Heart right ventricle (tissue), 16 donors: ENCODE measurements at regions of chr15 and their contacts with region 1.

Region 1: DNA sequence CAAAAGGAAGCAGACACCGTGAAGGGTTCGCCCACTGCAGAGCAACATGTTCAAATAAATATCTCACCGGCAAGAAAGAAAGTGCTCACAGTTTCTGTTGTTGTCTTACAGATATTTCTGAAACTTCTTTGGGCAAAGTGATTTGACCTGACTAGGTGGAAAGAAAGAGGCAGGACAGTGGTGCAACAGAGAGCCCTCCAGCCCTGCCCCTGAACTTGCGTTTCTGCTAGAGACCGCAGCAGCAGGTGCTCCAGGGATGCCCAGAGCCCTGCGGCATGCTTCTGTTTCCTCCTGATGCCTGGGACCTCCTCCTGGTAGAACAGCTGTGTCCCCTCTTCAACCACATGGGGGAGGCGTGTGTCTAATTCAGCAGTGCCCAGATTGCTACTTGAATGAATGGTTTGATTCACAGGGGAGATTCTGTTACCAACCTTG is 123.4 kb downstream of the ATP10A start:
- DNase-seq: no peak
- ATAC-seq: no peak
- H3K4me3 ChIP-seq: no peak overlapping the region
- H3K27ac ChIP-seq: no peak overlapping the region
- H3K4me1 ChIP-seq: peaks cover 0 to 33% (median 20%) of the 10 kb centered on the region in 9 donors
- H3K27me3 ChIP-seq: peaks cover 0 to 5% (median 0%) of the 10 kb centered on the region in 7 donors
- CTCF ChIP-seq: peak in 7 of 9 donors; percentile 23 to 51 (median 31)

Region 2: GRCh38 chr15:25775317-25775912 is 35.7 kb after region 1 on chr15:
- intact Hi-C with region 1: loop called in 1 of 10 experiments (anchors 5 kb)
- DNase-seq: peak; percentile 64 to 81
- ATAC-seq: peak; percentile 84 to 95 (median 92)
- H3K4me3 ChIP-seq: no peak overlapping the region
- H3K27ac ChIP-seq: peak overlapping the region in 4 of 10 donors; percentile 18 to 45 (median 37)
- H3K4me1 ChIP-seq: peaks cover 0 to 19% (median 12%) of the 10 kb centered on the region in 9 donors
- H3K27me3 ChIP-seq: no peaks in the 10 kb centered on the region
- CTCF ChIP-seq: no peak

Region 3: GRCh38 chr15:25790000-25790660 is 50.4 kb after region 1 on chr15:
- intact Hi-C with region 1: loop called in 2 of 10 experiments (anchors 5 to 10 kb)
- DNase-seq: peak; percentile 49 to 54
- ATAC-seq: peak; percentile 75 to 85 (median 78)
- H3K4me3 ChIP-seq: no peak overlapping the region
- H3K27ac ChIP-seq: peak overlapping the region; percentile 23 to 88 (median 70)
- H3K4me1 ChIP-seq: peaks cover 0 to 65% (median 25%) of the 10 kb centered on the region in 9 donors
- H3K27me3 ChIP-seq: no peaks in the 10 kb centered on the region
- CTCF ChIP-seq: peak in 1 of 9 donors; percentile 4

Region 4: DNA sequence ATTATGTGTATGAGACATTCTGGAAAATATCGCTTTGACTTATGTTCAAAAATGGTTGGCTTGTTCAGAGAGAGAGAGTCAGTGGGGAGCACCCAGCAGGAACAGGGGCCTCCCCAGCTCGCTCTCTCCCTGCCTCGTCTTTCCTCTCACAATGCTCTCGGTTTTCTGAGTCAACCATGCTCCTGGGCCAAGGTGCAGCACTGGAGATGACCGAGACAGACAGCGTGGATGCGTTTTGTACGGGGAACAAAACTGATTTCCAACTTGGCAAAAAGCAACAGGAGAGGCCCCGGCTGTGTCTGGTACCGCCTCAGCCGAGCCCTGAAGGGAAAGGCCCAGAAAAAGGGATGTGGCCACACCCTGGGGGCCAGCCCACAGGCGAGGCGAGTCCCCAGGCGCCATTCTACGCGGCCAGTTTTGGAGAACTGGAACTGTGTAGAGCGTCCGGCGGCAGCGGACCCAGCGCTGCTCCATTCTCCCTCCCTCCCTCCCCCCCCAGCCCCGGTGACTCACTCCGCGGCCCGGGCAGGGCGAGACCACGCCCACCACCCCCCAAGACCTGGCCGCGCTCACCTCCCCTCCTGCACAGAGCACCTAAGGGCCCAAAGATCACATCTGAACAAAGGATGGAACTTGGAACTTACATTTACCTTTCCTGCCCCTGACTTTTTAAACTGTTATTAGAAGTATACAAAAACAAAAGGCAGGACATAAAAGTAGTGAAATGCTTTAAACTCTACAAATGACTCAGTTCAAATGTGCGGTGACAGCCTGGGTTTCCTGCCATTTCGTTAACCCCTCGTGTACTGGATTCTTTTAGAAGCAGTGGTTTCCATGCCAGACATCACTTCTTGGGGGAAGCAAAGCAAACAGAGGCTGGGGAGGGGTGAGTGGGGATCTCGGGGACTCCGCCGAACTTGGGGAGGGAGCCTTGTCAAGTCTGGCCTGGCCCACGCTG is 110.7 kb after region 1 on chr15:
- intact Hi-C with region 1: loop called in 1 of 10 experiments (anchors 5 kb)
- DNase-seq: peak; percentile 77 to 79
- ATAC-seq: peak; percentile 84 to 95 (median 89)
- H3K4me3 ChIP-seq: peak overlapping the region in 9 of 10 donors; percentile 23 to 53 (median 46)
- H3K27ac ChIP-seq: peak overlapping the region; percentile 40 to 86 (median 75)
- H3K4me1 ChIP-seq: peaks cover 0 to 50% (median 15%) of the 10 kb centered on the region in 9 donors
- H3K27me3 ChIP-seq: peaks cover 0 to 4% (median 0%) of the 10 kb centered on the region in 7 donors
- CTCF ChIP-seq: no peak

Region 5: GRCh38 chr15:25863111-25863967 is 123.6 kb after region 1 on chr15 and contains the start of gene ATP10A:
- intact Hi-C with region 1: loop called in 2 of 10 experiments (anchors 5 to 10 kb)
- DNase-seq: peak; percentile 44 to 45
- ATAC-seq: peak; percentile 21 to 68 (median 43)
- H3K4me3 ChIP-seq: peak within 1 kb of the TSS; percentile 21 to 68 (median 62)
- H3K27ac ChIP-seq: peak within 1 kb of the TSS in 8 of 10 donors; percentile 29 to 73 (median 52)
- H3K4me1 ChIP-seq: peaks cover 0 to 44% (median 21%) of the 10 kb centered on the region in 9 donors
- H3K27me3 ChIP-seq: peaks cover 0 to 56% (median 34%) of the 10 kb centered on the region in 7 donors
- CTCF ChIP-seq: no peak
- total RNA-seq, gene ATP10A: 0.45 to 1.9 (median 0.86) TPM

Region 6: DNA sequence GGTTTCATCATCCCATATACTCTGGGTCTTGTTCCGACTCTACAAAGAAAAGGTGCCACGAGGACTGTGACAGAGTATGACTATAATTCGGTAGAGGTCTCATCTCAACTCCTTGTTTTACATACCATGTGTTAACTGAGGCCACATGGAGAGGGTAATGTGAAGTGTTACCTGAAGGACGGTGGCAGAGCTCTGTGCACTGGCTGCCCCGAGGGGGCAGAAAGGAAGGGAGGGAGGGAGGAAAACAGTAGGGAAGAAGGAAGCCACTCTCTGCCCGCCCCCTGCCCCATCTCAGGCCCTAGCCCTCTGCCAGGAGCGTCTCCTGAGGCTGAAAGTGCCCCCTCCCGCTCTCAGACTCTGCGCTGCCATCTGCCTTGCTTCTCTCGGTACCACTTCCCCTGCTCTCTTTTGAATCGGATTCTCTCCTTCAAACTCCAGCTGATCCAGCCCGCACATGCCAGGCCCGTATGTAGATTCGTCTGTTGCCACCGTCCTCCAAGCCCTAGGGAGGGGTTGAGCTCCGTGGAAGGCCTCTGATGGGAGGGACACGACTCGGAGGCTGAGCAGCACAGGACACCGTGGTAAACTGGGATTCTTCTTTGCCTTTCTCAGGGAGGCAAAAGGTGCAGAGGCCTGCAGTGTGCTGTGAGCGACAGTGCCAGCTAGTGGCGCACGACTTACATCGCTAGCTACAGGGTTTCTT is 193.9 kb after region 1 on chr15:
- intact Hi-C with region 1: loop called in 2 of 10 experiments (anchors 10 kb)
- DNase-seq: peak; percentile 51 to 70
- ATAC-seq: peak; percentile 81 to 94 (median 88)
- H3K4me3 ChIP-seq: peak overlapping the region in 7 of 10 donors; percentile 7 to 31 (median 23)
- H3K27ac ChIP-seq: no peak overlapping the region
- H3K4me1 ChIP-seq: peaks cover 0 to 7% (median 0%) of the 10 kb centered on the region in 9 donors
- H3K27me3 ChIP-seq: peaks cover 0 to 7% (median 0%) of the 10 kb centered on the region in 7 donors
- CTCF ChIP-seq: peak; percentile 44 to 74 (median 66)